ENCODE measurements at regions of chr6 and their contacts with region 1.

Region 1: GRCh38 chr6:103812970-103813369 is 1046.7 kb downstream of the HACE1 start:
- DNase-seq: no peak
- H3K4me3 Mint-ChIP-seq: no peak overlapping the region
- H3K27ac Mint-ChIP-seq: no peak overlapping the region
- H3K4me1 Mint-ChIP-seq: no peaks in the 10 kb centered on the region
- H3K27me3 Mint-ChIP-seq: peaks cover 26% of the 10 kb centered on the region
- CTCF ChIP-seq: no peak

Region 2: GRCh38 chr6:104483225-104483834 is 670.4 kb after region 1 on chr6:
- CTCF ChIA-PET with region 1: no interaction called
- POLR2A ChIA-PET with region 1: no interaction called
- intact Hi-C with region 1: loop called (anchors 2 kb)
- DNase-seq: peak; percentile 47
- H3K4me3 Mint-ChIP-seq: no peak overlapping the region
- H3K27ac Mint-ChIP-seq: no peak overlapping the region
- H3K4me1 Mint-ChIP-seq: no peaks in the 10 kb centered on the region
- H3K27me3 Mint-ChIP-seq: no peaks in the 10 kb centered on the region
- CTCF ChIP-seq: peak; percentile 54

Measured in MCF 10A (cell line).